A549 (cell line): ENCODE measurements at regions of chr17 and their contacts with region 1.

Region 1: DNA sequence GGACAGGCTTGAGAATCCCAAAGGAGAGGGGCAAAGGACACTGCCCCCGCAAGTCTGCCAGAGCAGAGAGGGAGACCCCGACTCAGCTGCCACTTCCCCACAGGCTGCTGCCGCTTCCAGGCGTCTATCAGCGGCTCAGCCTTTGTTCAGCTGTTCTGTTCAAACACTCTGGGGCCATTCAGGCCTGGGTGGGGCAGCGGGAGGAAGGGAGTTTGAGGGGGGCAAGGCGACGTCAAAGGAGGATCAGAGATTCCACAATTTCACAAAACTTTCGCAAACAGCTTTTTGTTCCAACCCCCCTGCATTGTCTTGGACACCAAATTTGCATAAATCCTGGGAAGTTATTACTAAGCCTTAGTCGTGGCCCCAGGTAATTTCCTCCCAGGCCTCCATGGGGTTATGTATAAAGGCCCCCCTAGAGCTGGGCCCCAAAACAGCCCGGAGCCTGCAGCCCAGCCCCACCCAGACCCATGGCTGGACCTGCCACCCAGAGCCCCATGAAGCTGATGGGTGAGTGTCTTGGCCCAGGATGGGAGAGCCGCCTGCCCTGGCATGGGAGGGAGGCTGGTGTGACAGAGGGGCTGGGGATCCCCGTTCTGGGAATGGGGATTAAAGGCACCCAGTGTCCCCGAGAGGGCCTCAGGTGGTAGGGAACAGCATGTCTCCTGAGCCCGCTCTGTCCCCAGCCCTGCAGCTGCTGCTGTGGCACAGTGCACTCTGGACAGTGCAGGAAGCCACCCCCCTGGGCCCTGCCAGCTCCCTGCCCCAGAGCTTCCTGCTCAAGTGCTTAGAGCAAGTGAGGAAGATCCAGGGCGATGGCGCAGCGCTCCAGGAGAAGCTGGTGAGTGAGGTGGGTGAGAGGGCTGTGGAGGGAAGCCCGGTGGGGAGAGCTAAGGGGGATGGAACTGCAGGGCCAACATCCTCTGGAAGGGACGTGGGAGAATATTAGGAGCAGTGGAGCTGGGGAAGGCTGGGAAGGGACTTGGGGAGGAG is at the start of gene CSF3:
- DNase-seq: no peak
- ATAC-seq: 0 out of 6 replicates have a peak, but pooled peaks have one; percentile 1 to 4
- H3K4me3 ChIP-seq: no peak within 1 kb of the TSS
- H3K27ac ChIP-seq: peak within 1 kb of the TSS; percentile 42 to 46; a peak in 3 of 6 replicates
- H3K4me1 ChIP-seq: peaks cover 17% of the 10 kb centered on the region; the same call in 2 of the 3 replicates
- CTCF ChIP-seq: no peak
- EP300 ChIP-seq: no peak
- POLR2A ChIP-seq: no peak
- RAD21 ChIP-seq: no peak
- polyA plus RNA-seq, gene CSF3: 0.41 TPM in 1 of 2 replicates, not detected in the other

Region 2: GRCh38 chr17:39687811-39688518 is 327.3 kb before region 1 on chr17 and contains the start of gene PGAP3:
- CTCF ChIA-PET with region 1: no interaction called
- POLR2A ChIA-PET with region 1: no interaction called
- DNase-seq: peak; percentile 96 to 99
- ATAC-seq: peak; percentile 96 to 97
- H3K4me3 ChIP-seq: peak within 1 kb of the TSS; percentile 61
- H3K27ac ChIP-seq: peak within 1 kb of the TSS; percentile 80 to 92
- H3K4me1 ChIP-seq: peaks cover 7% of the 10 kb centered on the region
- CTCF ChIP-seq: 0 out of 3 replicates have a peak, but pooled peaks have one; percentile 5
- EP300 ChIP-seq: no peak
- POLR2A ChIP-seq: peak; percentile 66
- RAD21 ChIP-seq: no peak; a peak in 1 of 5 replicates
- polyA plus RNA-seq, gene PGAP3: 8.5 and 10.6 TPM in 2 replicates

Region 3: DNA sequence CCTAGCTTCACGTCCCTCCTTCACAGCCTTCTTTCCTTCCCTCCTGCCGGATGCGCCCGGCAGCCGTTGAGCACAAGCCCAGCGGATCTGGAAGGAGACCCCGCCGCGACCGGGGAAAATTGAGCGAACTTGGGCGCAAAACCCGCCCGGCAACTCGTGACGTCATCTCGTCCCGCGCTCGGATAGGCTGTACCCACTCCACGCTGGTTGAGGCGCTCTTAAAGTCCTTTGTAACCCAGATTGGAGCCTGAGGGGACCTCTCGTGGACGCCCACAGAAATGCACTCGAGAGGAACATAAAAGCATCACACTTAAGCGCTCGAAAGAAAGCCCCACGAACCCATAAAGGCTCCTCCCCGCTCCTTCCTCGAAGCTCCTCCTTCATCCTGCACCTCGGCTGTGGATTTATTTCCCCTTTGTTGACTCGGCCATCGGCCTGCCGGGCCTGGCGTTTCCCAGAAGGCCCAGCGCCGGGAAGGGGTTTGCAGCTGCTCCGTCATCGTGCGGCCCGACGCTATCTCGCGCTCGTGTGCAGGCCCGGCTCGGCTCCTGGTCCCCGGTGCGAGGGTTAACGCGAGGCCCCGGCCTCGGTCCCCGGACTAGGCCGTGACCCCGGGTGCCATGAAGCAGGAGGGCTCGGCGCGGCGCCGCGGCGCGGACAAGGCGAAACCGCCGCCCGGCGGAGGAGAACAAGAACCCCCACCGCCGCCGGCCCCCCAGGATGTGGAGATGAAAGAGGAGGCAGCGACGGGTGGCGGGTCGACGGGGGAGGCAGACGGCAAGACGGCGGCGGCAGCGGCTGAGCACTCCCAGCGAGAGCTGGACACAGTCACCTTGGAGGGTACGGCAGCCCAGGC is 34.7 kb before region 1 on chr17 and contains the start of gene PSMD3:
- CTCF ChIA-PET with region 1: interaction called, 15 read pairs
- POLR2A ChIA-PET with region 1: interaction called, 3 read pairs
- DNase-seq: peak; percentile 97 to 100
- ATAC-seq: peak; percentile 91 to 94
- H3K4me3 ChIP-seq: peak within 1 kb of the TSS; percentile 89
- H3K27ac ChIP-seq: peak within 1 kb of the TSS; percentile 93 to 95
- H3K4me1 ChIP-seq: peaks cover 20% of the 10 kb centered on the region
- CTCF ChIP-seq: peak; percentile 79
- EP300 ChIP-seq: no peak
- POLR2A ChIP-seq: peak; percentile 87
- RAD21 ChIP-seq: peak; percentile 79 to 85
- polyA plus RNA-seq, gene PSMD3: 87.7 and 113 TPM in 2 replicates

Region 4: GRCh38 chr17:40062329-40063186 is 47.3 kb after region 1 on chr17 and contains the start of gene THRA:
- CTCF ChIA-PET with region 1: interaction called, 26 read pairs
- POLR2A ChIA-PET with region 1: no interaction called
- DNase-seq: peak in 1 of 2 experiments; percentile 68
- ATAC-seq: peak; percentile 65 to 70
- H3K4me3 ChIP-seq: peak within 1 kb of the TSS; percentile 98
- H3K27ac ChIP-seq: peak within 1 kb of the TSS; percentile 92 to 98
- H3K4me1 ChIP-seq: peaks cover 33% of the 10 kb centered on the region
- CTCF ChIP-seq: peak; percentile 86
- EP300 ChIP-seq: no peak
- POLR2A ChIP-seq: no peak
- RAD21 ChIP-seq: no peak; a peak in 3 of 5 replicates
- polyA plus RNA-seq, gene THRA: 20.1 and 27.4 TPM in 2 replicates

Region 5: DNA sequence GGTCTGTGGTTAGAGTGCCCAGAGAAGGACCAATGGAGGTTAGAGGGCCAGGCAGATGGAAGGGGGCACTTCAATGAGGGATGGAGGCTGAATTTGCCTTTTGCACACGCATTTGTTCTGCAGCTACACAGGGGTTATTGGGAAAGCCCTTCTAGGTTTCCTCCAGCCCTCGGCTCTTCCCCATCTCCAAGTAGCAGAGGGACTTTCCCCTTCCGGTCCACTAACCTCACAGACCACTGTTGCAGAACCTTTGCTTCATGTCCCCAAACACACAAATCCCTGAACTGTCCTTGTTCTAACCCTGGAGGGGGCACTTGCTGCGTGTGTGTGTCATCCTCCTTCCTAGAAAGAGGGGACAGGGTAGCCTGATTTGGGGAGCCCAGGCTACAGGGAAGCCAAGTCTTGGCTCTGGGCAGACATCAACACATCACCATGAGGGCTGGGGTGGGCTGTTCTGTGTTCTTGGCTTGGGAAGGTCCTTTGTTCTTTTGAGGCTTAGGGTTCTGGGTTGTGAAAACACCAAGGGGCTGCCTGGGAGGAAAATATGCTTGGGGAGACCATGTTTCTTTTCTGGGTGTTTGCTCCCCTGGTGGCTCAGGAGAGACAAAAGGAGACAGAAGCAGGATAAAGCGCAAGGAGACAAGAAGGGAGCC is 92.3 kb after region 1 on chr17:
- CTCF ChIA-PET with region 1: interaction called, 142 read pairs
- POLR2A ChIA-PET with region 1: interaction called, 3 read pairs
- DNase-seq: no peak
- ATAC-seq: no peak
- H3K4me3 ChIP-seq: no peak overlapping the region
- H3K27ac ChIP-seq: peak overlapping the region; percentile 29 to 70; a peak in 5 of 6 replicates
- H3K4me1 ChIP-seq: peaks cover 65% of the 10 kb centered on the region
- CTCF ChIP-seq: no peak
- EP300 ChIP-seq: no peak
- POLR2A ChIP-seq: no peak
- RAD21 ChIP-seq: no peak

Region 6: DNA sequence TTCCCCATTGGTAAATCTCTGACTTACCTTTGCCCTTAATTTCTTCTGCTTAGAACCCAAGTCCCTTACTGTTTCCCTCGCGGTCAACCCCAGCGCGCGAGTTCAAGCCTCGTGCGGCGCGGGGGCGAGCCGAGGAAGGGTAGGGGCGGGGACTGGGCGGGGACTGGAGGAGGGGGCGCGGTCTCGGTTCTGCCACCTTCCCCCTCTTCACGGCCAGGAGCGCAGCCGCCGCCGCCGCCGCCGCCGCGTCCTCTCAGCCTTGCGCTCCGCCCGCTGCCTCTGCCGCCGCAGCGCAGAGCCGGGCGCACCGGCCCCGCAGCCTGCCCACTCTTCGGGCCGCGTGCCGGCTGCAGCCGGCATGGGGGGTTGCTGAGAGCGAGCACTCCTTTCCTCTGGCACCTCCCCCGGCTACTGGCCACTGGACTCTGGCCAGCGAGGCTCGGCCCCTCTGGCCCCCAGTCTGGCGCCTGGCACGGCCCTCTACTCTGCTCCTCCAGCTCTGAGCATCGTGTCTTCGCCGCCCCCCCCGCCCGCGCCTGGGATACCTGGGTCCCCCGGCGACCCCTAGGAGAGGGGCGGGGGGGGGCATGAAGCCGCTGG is 162.1 kb after region 1 on chr17 and contains the start of gene RAPGEFL1:
- CTCF ChIA-PET with region 1: interaction called, 17 read pairs
- POLR2A ChIA-PET with region 1: no interaction called
- DNase-seq: no peak
- ATAC-seq: peak; percentile 26 to 53; a peak in 3 of 6 replicates
- H3K4me3 ChIP-seq: peak within 1 kb of the TSS; percentile 27; the same call in 2 of the 3 replicates
- H3K27ac ChIP-seq: peak within 1 kb of the TSS in 1 of 2 experiments; percentile 47; a peak in 2 of 6 replicates
- H3K4me1 ChIP-seq: peaks cover 26% of the 10 kb centered on the region
- CTCF ChIP-seq: no peak
- EP300 ChIP-seq: no peak
- POLR2A ChIP-seq: no peak
- RAD21 ChIP-seq: no peak
- polyA plus RNA-seq, gene RAPGEFL1: 3.7 and 4.1 TPM in 2 replicates